Cardiac septum (tissue), 1 donor: ENCODE measurements at regions of chr11 and their contacts with region 1.

Region 1: GRCh38 chr11:117098269-117099232 is at the start of gene SIK3:
- DNase-seq: peak; percentile 97
- total RNA-seq, gene SIK3: 47.4 TPM

Region 2: GRCh38 chr11:116879800-116880625 is 218.5 kb before region 1 on chr11:
- intact Hi-C with region 1: loop called (anchors 2 kb)
- DNase-seq: no peak

Region 3: DNA sequence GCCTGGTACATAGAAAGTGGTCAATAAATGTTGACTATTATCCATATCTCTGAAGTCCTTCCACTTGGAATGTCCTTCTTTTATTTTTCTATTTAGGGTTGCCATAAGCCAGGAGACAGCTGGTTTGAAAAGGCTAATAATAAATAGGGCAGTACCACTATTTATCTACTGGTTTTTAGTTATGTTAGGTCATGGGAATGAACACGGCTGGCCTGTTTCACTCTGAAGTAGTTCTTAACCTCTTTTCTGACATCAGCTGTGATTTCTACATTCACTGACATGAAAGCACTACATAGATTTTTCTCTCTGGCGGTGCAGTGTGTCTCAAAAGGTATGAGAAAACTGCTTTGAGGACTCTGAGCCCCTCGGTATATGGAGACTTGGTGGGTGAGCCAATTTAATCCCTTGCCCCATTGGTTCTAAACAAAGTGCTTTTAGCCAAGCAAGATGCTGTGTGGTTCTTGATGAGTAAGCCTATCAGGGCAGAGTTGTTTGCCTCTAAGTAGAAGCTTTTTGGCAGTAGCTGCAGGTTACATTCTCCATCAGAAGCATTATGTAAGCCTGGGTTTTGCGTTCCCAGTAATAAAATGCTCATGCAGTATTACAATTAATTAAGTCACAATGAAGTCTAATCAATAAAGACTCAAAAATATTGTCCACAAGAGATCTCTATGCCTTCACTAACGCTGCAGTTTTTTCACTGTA is 212.4 kb before region 1 on chr11:
- intact Hi-C with region 1: loop called (anchors 5 kb)
- DNase-seq: no peak